Panc1 (cell line): ENCODE measurements at regions of chr17 and their contacts with region 1.

Region 1: GRCh38 chr17:8409966-8410864 is 12.6 kb upstream of the RNF222 start:
- DNase-seq: peak; percentile 71
- ATAC-seq: peak; percentile 98
- H3K4me3 ChIP-seq: no peak overlapping the region
- H3K27ac ChIP-seq: no peak overlapping the region
- H3K4me1 ChIP-seq: no peaks in the 10 kb centered on the region
- H3K27me3 ChIP-seq: no peaks in the 10 kb centered on the region
- CTCF ChIP-seq: peak; percentile 89

Region 2: GRCh38 chr17:8745586-8746500 is 335.6 kb after region 1 on chr17:
- CTCF ChIA-PET with region 1: interaction called, 6 read pairs
- POLR2A ChIA-PET with region 1: interaction called, 4 read pairs
- in situ Hi-C with region 1: no loop called
- intact Hi-C with region 1: loop called (anchors 10 kb)
- DNase-seq: no peak
- ATAC-seq: peak; percentile 94
- H3K4me3 ChIP-seq: peak overlapping the region; percentile 46 to 62
- H3K27ac ChIP-seq: no peak overlapping the region
- H3K4me1 ChIP-seq: no peaks in the 10 kb centered on the region
- H3K27me3 ChIP-seq: peaks cover 1% of the 10 kb centered on the region; the same call in 1 of the 2 replicates
- CTCF ChIP-seq: peak; percentile 92